ENCODE measurements at regions of chr18 and their contacts with region 1.

Region 1: DNA sequence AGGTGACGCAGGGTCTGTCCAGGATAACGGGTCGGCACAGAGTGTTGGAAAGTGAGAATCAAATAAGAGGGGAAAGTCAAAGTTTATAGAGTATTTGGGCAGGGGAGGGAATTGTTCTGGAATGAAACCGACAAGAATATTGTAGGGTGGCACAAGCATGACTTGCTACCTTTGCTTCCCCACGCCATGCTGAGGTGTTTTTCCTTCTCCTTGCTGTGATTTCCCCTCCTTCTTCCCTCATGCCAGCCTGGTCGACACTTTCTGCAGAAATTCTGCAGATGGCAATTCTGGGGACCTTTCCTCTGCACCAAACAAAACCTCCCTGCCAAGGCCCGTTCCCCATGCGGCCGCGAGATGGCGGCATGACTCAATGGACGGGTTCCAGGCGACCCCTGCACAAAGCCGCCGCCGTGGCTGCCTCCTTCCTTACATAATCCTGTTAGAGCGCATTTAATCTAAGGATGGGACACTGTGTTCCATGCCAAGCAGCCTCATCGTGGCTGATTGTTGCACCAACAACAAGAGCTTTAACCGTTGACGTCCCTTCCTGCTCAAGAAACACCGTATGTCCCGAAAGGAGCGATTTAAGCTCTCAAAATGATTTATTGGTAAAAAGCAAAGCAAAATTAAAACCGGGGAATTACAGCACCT is at the start of gene MRO:
- DNase-seq: peak; percentile 93
- H3K4me3 Mint-ChIP-seq: no peak within 1 kb of the TSS
- H3K27ac Mint-ChIP-seq: no peak within 1 kb of the TSS
- H3K4me1 Mint-ChIP-seq: no peaks in the 10 kb centered on the region
- H3K27me3 Mint-ChIP-seq: peaks cover 10% of the 10 kb centered on the region
- total RNA-seq, gene MRO: not detected in 2 replicates

Region 2: GRCh38 chr18:50878345-50879301 is 58.8 kb after region 1 on chr18 and contains the start of gene ME2:
- intact Hi-C with region 1: loop called (anchors 5 kb)
- DNase-seq: peak; percentile 98
- H3K4me3 Mint-ChIP-seq: peak within 1 kb of the TSS; percentile 95
- H3K27ac Mint-ChIP-seq: peak within 1 kb of the TSS; percentile 99
- H3K4me1 Mint-ChIP-seq: peaks cover 24% of the 10 kb centered on the region
- H3K27me3 Mint-ChIP-seq: peaks cover 4% of the 10 kb centered on the region
- total RNA-seq, gene ME2: 141 and 143 TPM in 2 replicates

Region 3: DNA sequence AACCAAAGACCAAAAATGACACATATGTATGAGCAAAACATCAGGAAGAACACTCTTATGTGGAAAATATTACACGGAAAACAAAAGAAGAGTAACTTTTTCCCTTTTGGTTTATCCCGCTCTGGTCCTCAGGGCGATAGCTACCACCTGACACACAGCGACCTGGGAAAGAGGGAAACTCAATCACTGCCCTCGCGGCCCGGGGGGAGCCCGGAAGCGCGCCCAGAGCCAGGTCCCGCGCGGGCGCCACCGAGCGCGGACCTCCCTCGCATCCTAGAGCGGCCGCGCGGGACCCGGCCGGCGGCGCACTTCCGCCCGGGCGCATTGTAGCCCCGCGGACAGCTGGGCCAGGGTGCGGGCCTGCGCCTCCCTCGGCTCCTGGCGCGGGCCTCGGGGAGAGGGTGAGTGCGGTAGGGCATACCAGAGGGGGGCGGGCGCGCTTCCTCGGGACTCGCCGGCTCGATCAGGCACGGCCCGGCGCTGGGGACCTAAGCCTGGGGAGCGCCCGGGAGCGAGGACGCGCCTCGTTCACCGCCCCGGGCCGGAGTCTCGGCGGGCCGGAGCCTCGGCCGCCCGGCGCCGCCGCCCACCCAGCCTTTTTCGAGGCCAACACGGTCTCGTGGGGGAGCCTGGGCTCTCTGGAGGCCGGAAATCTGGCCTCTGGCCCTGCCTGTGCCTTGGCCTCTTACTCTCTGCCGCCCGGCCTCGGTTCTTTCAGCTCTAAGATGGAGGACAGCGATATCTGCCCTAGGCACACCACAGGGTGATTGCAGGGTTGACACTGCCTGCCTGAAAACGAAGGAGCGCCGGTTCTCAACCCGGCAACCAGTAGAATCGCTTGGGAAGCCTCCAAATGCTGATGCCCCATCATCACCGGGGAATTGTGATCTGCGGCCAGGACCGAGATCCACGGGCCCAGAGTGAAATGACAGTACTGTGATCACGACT is 148.1 kb after region 1 on chr18 and contains the start of gene ELAC1:
- intact Hi-C with region 1: loop called (anchors 2 kb)
- DNase-seq: peak; percentile 91
- H3K4me3 Mint-ChIP-seq: peak within 1 kb of the TSS; percentile 97
- H3K27ac Mint-ChIP-seq: peak within 1 kb of the TSS; percentile 97
- H3K4me1 Mint-ChIP-seq: peaks cover 22% of the 10 kb centered on the region
- H3K27me3 Mint-ChIP-seq: peaks cover 2% of the 10 kb centered on the region
- total RNA-seq, gene ELAC1: 6.8 and 7.0 TPM in 2 replicates

Region 4: GRCh38 chr18:51051105-51051712 is 231.4 kb after region 1 on chr18:
- intact Hi-C with region 1: loop called (anchors 1 kb)
- DNase-seq: peak; percentile 76
- H3K4me3 Mint-ChIP-seq: no peak overlapping the region
- H3K27ac Mint-ChIP-seq: peak overlapping the region; percentile 34
- H3K4me1 Mint-ChIP-seq: peaks cover 29% of the 10 kb centered on the region
- H3K27me3 Mint-ChIP-seq: no peaks in the 10 kb centered on the region

Region 5: GRCh38 chr18:51107082-51107481 is 287.2 kb after region 1 on chr18:
- intact Hi-C with region 1: loop called (anchors 5 kb)
- DNase-seq: no peak
- H3K4me3 Mint-ChIP-seq: no peak overlapping the region
- H3K27ac Mint-ChIP-seq: peak overlapping the region; percentile 74
- H3K4me1 Mint-ChIP-seq: peaks cover 15% of the 10 kb centered on the region
- H3K27me3 Mint-ChIP-seq: no peaks in the 10 kb centered on the region

Measured in activated CD4-positive, alpha-beta T cell treated with anti-CD3 and anti-CD28 coated beads, Interleukin-2, amount 10 ng/mL, durations not matched to agents 24 days and 14 days (primary cell).